ENCODE measurements at regions of chr16 and their contacts with region 1.

Region 1: DNA sequence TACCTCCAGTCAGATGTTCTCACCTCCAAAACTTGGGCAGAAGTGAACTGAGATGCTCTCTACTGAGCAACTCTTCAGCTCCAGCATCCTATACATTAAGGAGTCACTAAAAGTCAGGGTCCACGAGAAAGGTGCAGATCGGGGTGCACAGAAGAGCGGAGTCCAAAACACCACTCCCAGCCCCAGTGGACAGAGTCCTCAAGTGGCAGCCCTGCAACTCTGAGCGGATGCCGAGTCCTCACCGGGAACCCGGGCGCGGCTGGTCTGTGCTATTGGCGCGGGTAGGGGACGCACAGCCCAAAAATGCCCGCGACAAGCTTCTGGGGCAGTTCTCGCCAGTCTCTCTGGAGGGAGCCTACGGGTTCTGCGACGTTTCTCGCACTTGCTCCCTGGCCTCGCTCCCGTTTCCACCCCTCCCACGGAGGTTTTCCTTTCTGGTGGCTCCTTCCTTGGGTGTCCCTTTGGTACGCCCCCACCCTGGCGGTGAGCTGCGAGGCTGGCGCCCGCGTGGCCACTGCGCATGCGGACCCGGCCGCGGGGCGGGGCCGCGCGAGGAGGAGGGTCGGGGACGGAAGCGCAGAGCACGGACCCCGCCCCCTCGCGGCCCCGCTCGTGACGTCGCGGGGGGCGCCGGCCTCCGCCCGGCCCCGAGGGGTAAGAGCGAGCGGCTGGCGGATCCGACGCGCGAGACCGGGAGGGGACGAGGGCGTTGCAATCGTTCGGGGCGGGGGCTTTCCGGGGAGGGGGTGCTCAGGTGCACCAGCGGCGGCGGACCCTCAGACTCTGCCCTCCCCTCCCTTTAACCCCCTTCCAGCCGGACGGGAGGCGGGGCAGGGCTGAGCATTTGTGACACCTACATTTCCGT is at the start of gene TMEM219:
- DNase-seq: peak; percentile 94 to 97
- ATAC-seq: peak; percentile 96
- H3K4me3 ChIP-seq: peak within 1 kb of the TSS; percentile 29 to 72
- H3K27ac ChIP-seq: peak within 1 kb of the TSS in 1 of 2 donors; percentile 72
- H3K4me1 ChIP-seq: no peaks in the 10 kb centered on the region
- H3K27me3 ChIP-seq: no peaks in the 10 kb centered on the region
- total RNA-seq, gene TMEM219: 88.0 to 115 TPM

Region 2: GRCh38 chr16:29862884-29863668 is 98.6 kb before region 1 on chr16 and contains the start of gene CDIPT:
- intact Hi-C with region 1: loop called in 1 of 2 experiments (anchors 10 kb)
- DNase-seq: peak; percentile 95 to 96
- ATAC-seq: peak; percentile 97
- H3K4me3 ChIP-seq: peak within 1 kb of the TSS; percentile 58 to 80
- H3K27ac ChIP-seq: peak within 1 kb of the TSS; percentile 2 to 41
- H3K4me1 ChIP-seq: peaks cover 0 to 2% of the 10 kb centered on the region in 2 donors
- H3K27me3 ChIP-seq: no peaks in the 10 kb centered on the region
- total RNA-seq, gene CDIPT: 63.6 to 81.1 TPM

Region 3: GRCh38 chr16:29926005-29926710 is 35.6 kb before region 1 on chr16 and contains the start of gene KCTD13:
- intact Hi-C with region 1: loop called (anchors 2 to 5 kb)
- DNase-seq: peak; percentile 88 to 95
- ATAC-seq: peak; percentile 99
- H3K4me3 ChIP-seq: peak within 1 kb of the TSS; percentile 80 to 85
- H3K27ac ChIP-seq: peak within 1 kb of the TSS in 1 of 2 donors; percentile 55
- H3K4me1 ChIP-seq: no peaks in the 10 kb centered on the region
- H3K27me3 ChIP-seq: no peaks in the 10 kb centered on the region
- total RNA-seq, gene KCTD13: 25.0 to 31.4 TPM

Region 4: GRCh38 chr16:29995911-29996772 is 34.4 kb after region 1 on chr16 and contains the start of gene INO80E:
- intact Hi-C with region 1: loop called in 1 of 2 experiments (anchors 5 kb)
- DNase-seq: peak; percentile 99 to 100
- ATAC-seq: peak; percentile 99
- H3K4me3 ChIP-seq: peak within 1 kb of the TSS; percentile 62 to 66
- H3K27ac ChIP-seq: peak within 1 kb of the TSS in 1 of 2 donors; percentile 79
- H3K4me1 ChIP-seq: no peaks in the 10 kb centered on the region
- H3K27me3 ChIP-seq: no peaks in the 10 kb centered on the region
- total RNA-seq, gene INO80E: 46.1 to 73.1 TPM

Region 5: DNA sequence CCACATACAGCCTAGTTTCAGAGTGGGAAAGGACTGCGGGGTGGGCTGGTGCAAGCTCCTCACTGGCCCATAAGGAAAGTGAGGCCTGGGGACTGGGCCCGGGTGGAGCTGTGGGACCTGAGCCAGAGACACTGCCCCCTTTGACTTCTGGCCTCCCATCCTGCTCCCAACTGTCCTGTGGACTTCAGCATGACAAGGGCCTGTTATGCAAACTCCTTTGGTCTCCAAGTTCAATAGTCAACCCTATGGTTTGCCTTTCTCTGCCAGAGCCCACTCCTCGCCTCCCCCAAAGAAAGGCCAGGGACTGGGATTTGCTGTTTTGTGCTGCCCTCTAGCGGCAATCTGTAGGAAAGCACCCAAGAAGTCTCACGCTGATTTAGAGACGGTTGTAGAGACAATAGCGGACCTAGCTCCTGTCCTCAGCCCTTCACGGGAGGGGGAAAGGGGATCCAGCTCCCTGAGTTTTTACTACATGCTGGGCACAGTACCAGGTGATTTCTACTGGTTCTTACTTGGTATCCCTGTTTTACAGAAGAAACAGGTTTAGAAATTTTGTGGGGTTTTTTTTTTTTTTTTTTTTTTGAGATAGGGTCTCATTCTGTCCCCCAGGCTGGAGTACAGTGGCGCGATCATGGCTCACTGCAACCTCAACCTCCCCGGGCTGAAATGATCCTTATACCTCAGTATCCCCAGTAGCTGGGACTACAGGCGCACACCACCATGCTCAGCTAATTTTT is 70.5 kb after region 1 on chr16:
- intact Hi-C with region 1: no loop called
- DNase-seq: no peak
- ATAC-seq: peak; percentile 53
- H3K4me3 ChIP-seq: no peak overlapping the region
- H3K27ac ChIP-seq: no peak overlapping the region
- H3K4me1 ChIP-seq: no peaks in the 10 kb centered on the region
- H3K27me3 ChIP-seq: no peaks in the 10 kb centered on the region

Measured in aorta (tissue), 5 donors.